Posterior vena cava (tissue), 2 donors: ENCODE measurements at regions of chr2 and their contacts with region 1.

Region 1: GRCh38 chr2:176088048-176088936 is 4.2 kb upstream of the HOXD13 start:
- DNase-seq: peak; percentile 88

Region 2: GRCh38 chr2:175684457-175684856 is 403.8 kb before region 1 on chr2:
- intact Hi-C with region 1: loop called (anchors 5 to 10 kb)
- DNase-seq: no peak

Region 3: DNA sequence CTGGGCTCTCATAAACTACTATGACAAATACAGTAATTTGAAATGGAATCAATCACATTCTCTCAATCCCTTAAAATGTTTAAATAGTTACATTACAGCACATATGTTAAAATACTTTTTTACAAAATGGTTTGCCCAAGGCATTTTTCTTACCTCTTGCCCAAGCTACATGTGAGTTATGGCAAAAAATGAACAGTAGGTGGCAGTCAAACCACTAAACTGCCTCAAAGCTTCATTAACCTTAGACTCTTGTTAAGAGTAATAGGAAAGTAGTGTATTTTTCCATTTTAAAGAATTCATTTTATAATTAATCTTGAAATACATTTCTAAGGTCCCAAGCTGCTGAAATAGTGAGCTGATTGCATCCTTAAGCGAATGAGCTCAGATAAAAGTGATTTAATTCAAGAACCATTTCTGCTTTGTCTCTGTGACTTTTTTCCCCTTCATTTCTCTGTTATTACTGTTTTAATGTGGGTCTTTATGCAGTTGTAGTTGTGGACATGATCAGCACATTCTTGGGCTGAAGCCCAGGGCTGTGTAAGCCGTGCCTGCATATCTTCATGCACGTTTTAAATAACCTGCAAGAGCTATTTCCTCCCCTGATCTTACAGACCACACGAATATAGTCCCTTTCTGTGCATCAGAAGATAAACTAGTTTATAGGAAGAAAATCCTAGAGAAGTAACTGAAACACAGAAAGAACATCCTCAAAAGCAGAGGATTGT is 398.0 kb before region 1 on chr2:
- intact Hi-C with region 1: loop called (anchors 5 to 10 kb)
- DNase-seq: no peak

Region 4: DNA sequence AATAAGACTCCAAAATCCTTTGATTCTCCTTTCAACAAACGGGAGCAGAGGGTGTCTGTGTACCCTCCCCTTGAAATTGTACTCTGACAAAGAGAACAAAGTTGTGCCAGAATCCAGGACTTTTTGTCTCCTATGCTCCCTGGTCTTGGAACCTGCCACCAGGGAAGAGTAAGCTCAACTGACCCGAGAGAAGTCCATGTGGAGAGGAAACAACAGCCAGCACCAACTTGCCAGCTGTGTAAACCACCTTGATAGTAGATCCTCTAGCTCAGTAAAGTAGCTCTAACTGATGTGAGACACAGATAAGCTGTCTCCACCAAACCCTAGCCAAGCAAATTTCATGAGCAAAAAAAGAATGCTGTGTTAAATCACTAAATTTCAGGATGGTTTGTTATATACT is 133.2 kb before region 1 on chr2:
- intact Hi-C with region 1: no loop called
- DNase-seq: no peak